Transverse colon (tissue), 4 donors: ENCODE measurements at regions of chr18 and their contacts with region 1.

Region 1: DNA sequence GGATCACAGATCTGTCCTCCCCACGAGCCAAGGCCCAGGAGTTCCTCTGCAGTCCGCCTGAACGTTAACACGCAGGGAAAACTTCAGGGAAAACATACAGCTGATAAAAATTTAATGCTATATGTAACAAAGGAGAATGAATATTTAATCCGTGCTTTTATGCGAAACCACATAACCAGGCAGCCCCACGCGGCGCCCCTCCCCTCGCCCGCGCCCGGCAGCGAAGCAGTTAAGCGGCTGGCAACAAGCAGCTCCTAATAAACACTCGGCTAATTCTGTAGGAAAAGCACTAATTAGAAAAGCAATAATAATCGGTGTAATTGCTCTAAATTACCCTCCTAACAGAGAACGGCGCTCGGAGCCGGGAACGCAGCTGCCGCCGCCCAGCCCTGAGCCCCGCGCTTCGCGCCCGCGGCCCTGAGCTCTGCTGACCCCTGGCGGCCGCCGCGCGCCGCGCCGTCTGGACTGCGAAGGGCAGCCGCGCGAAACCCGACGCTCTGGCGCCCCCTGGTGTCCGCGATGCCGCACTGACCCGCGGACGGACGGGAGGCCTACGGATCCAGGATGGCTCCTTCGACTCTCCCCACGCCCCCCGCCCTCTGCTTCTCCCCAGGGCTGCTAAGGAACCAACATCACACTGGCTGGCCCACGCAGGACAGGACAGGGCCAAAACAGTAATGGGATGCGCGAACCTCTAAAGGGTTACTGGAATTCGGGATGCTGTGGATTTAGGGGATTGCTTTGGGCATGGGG is 181.4 kb downstream of the SMAD2 start:
- DNase-seq: peak; percentile 82
- H3K4me3 ChIP-seq: peak overlapping the region in 3 of 4 donors; percentile 14 to 34 (median 15)
- H3K27ac ChIP-seq: no peak overlapping the region
- H3K4me1 ChIP-seq: peaks cover 0 to 4% (median 3%) of the 10 kb centered on the region in 4 donors
- H3K27me3 ChIP-seq: no peaks in the 10 kb centered on the region
- CTCF ChIP-seq: peak; percentile 82 to 100 (median 99)
- EP300 ChIP-seq: no peak
- POLR2A ChIP-seq: no peak

Region 2: GRCh38 chr18:45850021-45850420 is 1899.0 kb before region 1 on chr18:
- in situ Hi-C with region 1: no loop called
- intact Hi-C with region 1: no loop called
- DNase-seq: no peak
- H3K4me3 ChIP-seq: no peak overlapping the region
- H3K27ac ChIP-seq: no peak overlapping the region
- H3K4me1 ChIP-seq: no peaks in the 10 kb centered on the region
- H3K27me3 ChIP-seq: no peaks in the 10 kb centered on the region
- CTCF ChIP-seq: no peak
- EP300 ChIP-seq: no peak
- POLR2A ChIP-seq: no peak

Region 3: GRCh38 chr18:47595815-47596496 is 153.1 kb before region 1 on chr18:
- in situ Hi-C with region 1: loop called in 3 of 4 experiments (anchors 10 kb)
- intact Hi-C with region 1: no loop called
- DNase-seq: peak; percentile 55
- H3K4me3 ChIP-seq: no peak overlapping the region
- H3K27ac ChIP-seq: no peak overlapping the region
- H3K4me1 ChIP-seq: peaks cover 0 to 5% (median 0%) of the 10 kb centered on the region in 4 donors
- H3K27me3 ChIP-seq: peaks cover 21% of the 10 kb centered on the region
- CTCF ChIP-seq: peak; percentile 34 to 71 (median 57)
- EP300 ChIP-seq: no peak
- POLR2A ChIP-seq: no peak